Ovary (tissue), 10 donors: ENCODE measurements at regions of chr14 and their contacts with region 1.

Region 1: DNA sequence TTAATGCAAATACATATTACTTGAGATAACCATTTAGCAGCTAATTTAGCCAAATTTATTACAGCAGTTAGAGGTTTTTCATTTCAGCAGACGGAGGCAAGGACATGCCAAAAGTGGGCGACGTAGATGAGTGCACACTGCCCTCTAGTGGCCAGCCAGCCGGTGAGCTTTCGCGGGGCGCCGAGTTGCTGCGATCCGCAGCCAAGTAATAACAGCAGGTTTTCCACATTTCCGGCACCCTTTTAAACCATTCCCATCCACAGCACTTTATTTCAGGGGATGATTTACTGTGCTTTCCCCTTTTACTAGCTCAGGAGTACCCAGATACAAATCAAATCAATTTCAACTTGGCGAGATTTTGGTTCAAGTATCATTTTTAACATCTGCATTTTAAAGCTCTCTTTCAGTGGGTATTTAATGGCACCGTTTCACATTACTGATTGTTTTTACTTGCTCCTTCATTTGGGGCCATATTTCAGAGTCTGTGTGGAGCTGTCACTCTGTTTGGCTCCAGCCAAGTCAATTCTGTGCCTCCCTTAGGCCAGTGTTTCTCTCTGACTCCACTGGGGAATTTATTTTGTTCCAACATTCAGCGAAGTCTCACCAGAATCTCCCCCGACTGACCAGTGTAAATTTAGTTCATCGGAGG is 158.0 kb downstream of the EGLN3 start:
- DNase-seq: peak; percentile 80 to 92 (median 88)
- H3K4me3 ChIP-seq: peak overlapping the region; percentile 13
- H3K27ac ChIP-seq: no peak overlapping the region
- H3K4me1 ChIP-seq: no peaks in the 10 kb centered on the region
- H3K27me3 ChIP-seq: no peaks in the 10 kb centered on the region
- CTCF ChIP-seq: peak; percentile 74
- EP300 ChIP-seq: no peak
- POLR2A ChIP-seq: no peak

Region 2: DNA sequence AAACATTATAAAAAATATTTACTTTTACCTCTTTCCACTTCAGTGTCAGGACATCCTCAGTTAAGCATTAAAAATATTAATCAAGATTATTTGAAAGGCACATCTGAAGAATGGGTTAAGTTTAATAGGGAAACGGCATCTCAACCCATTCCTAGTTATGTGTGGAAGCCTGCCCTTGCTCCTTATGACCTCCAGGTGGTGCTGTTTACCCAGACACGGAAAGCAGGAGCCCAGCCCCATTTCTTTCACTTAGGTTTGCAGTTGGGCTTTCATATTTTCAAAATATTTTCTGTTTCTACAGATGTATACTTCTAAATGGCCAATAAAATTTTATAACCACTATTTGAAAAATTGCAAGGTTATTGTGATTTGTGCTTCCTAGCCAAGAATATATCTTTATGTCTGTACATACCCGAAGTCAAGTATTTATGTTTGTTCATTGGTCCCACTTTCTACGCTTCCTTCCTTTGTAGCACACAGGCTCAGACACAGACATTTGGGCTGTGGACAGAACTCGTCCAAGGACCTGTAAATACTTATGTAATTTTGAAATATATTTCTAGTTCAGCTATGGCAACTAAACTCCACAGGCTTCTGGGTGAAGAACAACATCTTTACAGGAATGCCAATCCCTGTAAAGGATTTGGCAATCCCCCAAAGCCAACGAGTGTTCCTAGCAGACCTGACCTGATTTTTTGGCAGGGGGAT is 1216.6 kb before region 1 on chr14:
- intact Hi-C with region 1: loop called (anchors 1 to 10 kb)
- DNase-seq: peak; percentile 22 to 61 (median 42)
- H3K4me3 ChIP-seq: no peak overlapping the region
- H3K27ac ChIP-seq: no peak overlapping the region
- H3K4me1 ChIP-seq: no peaks in the 10 kb centered on the region
- H3K27me3 ChIP-seq: no peaks in the 10 kb centered on the region
- CTCF ChIP-seq: peak; percentile 57 to 88 (median 80)
- EP300 ChIP-seq: no peak
- POLR2A ChIP-seq: no peak